Prostate gland (tissue), 2 donors: ENCODE measurements at regions of chr16 and their contacts with region 1.

Region 1: DNA sequence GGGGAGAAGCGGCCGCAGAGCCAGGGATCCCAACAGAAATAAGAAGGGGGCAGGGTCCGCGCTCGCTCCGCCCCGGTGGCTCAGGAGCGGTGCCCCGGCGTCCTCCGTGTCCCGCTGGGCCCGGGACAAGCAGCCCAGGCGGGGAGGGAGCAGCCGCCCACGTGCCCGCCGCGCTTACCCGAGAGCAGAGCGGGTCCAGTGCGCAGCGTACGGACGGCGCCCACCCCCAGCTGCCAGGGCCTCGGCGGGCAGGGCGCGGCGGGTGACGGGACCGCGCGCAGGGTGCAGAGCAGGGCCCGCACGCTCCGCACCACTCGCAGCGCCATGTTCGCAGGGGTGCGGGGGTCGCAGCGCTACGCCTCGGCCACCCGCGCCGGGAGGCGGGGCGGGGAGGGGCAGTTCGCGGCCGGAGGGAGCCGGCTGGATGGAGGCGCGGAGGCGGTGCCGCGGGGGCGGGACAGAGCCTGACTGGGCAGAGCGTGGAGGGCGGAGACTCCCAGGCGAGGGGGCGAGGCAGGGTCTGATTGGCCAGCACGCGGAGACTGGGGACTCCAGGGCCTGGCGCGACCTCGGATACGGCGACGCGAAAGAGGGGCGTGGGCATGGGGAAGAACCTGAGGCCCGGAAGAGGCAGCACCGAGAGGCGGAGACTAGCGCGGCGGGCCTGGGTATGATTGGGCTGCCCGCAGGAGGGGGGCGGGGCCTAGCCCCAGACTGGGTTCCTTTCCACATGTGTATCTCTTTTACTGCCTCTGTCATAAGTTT is at the start of gene GCSH:
- DNase-seq: peak; percentile 100
- H3K4me3 ChIP-seq: peak within 1 kb of the TSS; percentile 74 to 76
- H3K27ac ChIP-seq: peak within 1 kb of the TSS; percentile 74 to 84
- H3K4me1 ChIP-seq: no peaks in the 10 kb centered on the region
- H3K27me3 ChIP-seq: no peaks in the 10 kb centered on the region
- CTCF ChIP-seq: no peak
- POLR2A ChIP-seq: peak; percentile 7
- total RNA-seq, gene GCSH: 7.6 to 27.5 TPM

Region 2: DNA sequence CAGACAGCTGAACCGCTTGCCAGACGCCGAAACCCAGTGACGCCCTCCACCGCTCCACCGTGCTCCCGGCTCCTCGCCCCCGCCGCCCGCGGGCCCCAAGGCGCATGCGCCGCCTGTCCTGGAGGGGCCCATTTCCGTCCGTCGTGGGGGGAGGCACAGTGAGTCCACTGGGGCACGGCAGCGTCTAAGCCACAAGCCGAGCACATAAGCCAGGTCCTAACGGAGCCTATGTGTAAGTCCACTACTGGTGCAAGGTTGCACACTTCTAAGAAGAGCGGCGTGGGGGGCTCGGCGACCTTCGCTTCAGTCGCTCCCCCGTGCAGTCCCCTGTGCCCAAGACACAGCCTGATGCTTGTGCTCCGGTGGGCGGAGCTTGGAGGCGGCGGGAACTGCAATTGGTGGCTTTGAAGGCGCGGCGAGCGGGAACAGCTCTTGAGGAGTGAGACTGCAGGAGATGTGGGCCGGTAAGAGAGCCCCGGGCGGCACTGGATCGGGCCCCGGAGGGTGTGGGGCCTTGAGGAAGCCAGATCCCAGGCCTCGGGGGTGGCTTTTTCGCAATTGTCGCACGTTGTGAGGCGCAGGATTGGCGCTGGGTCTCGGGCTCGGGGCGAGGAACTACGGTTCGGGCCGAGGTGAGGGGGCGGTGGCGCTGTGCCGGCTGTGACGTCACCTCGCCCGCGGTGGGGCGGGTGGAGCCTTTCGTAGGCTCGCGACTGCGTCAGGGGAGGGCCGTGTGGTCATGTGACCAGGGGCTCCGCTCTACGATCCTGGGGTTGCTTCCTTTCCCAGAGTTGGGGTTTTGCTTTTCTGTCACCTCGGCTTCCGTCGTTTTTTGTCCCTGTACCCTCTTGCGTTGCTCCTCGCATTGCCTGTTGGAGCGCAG is 89.1 kb before region 1 on chr16 and contains the starts of genes CENPN and CMC2:
- intact Hi-C with region 1: loop called (anchors 2 kb)
- DNase-seq: peak; percentile 99
- H3K4me3 ChIP-seq: peak within 1 kb of the TSS; percentile 86 to 99
- H3K27ac ChIP-seq: peak within 1 kb of the TSS; percentile 98 to 99
- H3K4me1 ChIP-seq: peaks cover 11% of the 10 kb centered on the region
- H3K27me3 ChIP-seq: no peaks in the 10 kb centered on the region
- CTCF ChIP-seq: peak in 2 of 4 experiments; percentile 24 to 26
- POLR2A ChIP-seq: peak; percentile 91
- total RNA-seq, gene CENPN: 40.6 to 103 TPM
- total RNA-seq, gene CMC2: 38.9 to 153 TPM

Region 3: DNA sequence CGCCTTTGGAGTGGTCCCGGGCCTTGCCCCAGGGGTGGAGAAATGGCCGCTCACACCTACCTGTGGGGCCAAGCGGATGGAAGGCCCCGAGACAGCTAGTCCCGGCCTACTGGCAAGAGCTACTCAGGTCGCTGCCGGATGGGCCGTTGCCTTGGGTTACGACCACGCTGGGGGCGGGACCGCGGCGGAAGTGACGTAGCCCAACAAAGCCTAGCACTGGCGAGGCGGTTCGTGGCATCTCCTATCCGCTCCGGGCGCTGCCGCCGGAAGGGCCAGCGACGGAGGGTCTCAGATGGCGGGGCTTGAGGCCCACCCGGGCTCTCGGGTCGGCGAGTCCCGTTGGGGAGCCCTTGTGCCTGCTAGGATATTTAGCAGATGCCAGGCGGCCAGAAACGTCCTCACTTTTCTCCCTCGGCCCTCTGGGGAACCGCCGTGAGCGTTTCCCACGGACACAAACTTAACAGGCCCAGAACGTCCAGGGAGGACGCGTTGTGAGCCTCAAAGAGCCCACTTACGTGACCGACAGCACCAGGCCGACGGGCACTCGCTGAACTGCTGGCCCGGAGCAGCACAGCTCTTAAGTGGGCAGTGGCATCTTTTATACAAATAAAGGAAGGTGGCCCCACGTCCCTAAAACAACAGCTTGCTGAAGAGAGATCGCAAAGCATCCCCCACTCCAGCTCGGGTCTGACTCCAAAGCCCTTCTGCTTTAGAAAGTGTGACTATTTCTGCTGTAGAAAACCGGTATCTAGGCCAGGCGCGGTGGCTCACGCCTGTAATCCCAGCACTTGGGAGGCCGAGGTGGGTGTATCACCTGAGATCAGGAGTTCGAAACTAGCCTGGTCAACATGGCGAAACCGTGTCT is 18.8 kb before region 1 on chr16 and contains the start of gene C16orf46:
- intact Hi-C with region 1: loop called (anchors 1 kb)
- DNase-seq: peak; percentile 96
- H3K4me3 ChIP-seq: peak within 1 kb of the TSS; percentile 60 to 67
- H3K27ac ChIP-seq: peak within 1 kb of the TSS; percentile 93 to 94
- H3K4me1 ChIP-seq: no peaks in the 10 kb centered on the region
- H3K27me3 ChIP-seq: no peaks in the 10 kb centered on the region
- CTCF ChIP-seq: peak in 2 of 4 experiments; percentile 7 to 32
- POLR2A ChIP-seq: peak; percentile 92
- total RNA-seq, gene C16orf46: 3.9 to 15.7 TPM

Region 4: GRCh38 chr16:81314603-81315270 is 218.6 kb after region 1 on chr16 and contains the start of gene GAN:
- intact Hi-C with region 1: loop called (anchors 10 kb)
- DNase-seq: peak; percentile 97
- H3K4me3 ChIP-seq: peak within 1 kb of the TSS; percentile 89 to 99
- H3K27ac ChIP-seq: peak within 1 kb of the TSS; percentile 93 to 96
- H3K4me1 ChIP-seq: peaks cover 7% of the 10 kb centered on the region
- H3K27me3 ChIP-seq: no peaks in the 10 kb centered on the region
- CTCF ChIP-seq: peak in 1 of 4 experiments; percentile 19
- POLR2A ChIP-seq: peak; percentile 97
- total RNA-seq, gene GAN: 8.2 to 10.1 TPM